Cardiac septum (tissue), 1 donor: ENCODE measurements at regions of chr5 and their contacts with region 1.

Region 1: DNA sequence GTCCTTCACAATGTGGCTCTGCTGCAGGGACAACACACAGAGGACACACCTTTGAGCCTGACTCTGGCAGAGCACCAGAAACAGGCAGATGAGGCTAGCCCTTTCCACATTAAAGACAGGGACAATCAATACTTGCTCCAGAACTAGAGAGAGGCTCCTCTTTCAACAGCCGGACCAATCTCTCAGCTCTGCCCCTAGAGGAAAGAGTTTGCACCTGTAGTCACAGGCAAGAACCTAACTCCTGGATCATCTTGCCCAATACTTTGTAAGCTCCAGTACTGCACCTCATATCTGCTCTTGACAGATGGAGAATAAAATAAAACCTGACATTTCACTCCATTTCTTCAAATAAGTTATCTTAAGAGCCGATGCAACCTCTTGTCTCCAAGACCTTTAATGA is 52.1 kb downstream of the EPB41L4A start:
- DNase-seq: no peak

Region 2: DNA sequence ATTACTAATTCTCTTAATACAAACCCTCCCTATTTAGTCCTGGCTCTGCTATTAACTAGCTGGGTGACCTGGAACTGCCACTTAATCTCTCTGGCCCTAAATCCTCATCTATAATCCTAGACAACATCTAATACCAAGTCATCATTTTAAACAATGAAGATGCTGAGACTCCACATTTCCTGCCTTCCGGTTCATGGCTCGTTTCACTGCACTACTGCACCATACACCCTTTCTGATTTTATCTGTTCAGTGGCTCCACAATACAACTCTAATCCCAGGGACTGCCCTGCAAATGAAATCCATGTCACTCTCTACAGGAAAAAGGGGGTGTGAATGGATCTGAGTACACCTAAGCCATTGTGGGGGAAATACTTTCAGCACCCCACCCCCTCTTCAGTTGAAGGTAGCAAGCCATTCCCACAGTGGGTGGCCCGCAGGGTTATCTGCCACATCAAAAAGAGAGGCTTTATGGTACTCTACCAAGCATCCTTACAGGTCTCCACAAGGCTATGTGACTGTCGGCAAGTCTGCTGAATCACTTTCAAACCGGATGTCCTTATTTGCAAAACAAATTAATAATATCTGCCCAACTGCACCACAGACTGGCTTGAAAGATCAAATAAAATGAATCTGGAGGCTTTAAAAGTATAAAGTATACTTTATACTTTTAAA is 37.4 kb before region 1 on chr5:
- intact Hi-C with region 1: loop called (anchors 5 kb)
- DNase-seq: no peak